Posterior cingulate gyrus (tissue), 11 donors: ENCODE measurements at regions of chr14 and their contacts with region 1.

Region 1: GRCh38 chr14:24710403-24711112 is 76.6 kb upstream of the GZMB start:
- DNase-seq: peak in 9 of 10 donors; percentile 53 to 93 (median 71)

Region 2: GRCh38 chr14:25150934-25151790 is 440.6 kb after region 1 on chr14:
- intact Hi-C with region 1: loop called (anchors 1 kb)
- DNase-seq: no peak

Region 3: DNA sequence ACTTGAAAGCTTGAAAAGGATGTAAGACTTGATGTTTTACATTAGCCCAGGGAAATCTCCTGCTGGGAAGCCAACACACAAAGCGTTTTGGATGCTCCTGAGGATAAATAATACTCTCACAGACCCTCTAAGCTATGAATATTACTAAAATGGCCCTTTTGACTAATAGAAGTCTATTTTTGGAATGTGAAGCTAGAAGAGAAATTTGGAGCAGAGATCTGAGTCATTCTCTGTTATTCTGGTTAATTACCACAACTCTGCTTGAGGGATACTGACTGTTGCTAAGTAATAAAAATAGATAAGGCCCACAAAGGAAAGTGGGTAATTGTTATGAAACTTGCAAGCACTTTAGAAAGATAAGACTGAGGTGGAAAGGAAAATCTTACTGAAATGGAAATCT is 685.6 kb after region 1 on chr14:
- intact Hi-C with region 1: loop called (anchors 5 kb)
- DNase-seq: no peak